ENCODE measurements at regions of chr18 and their contacts with region 1.

Region 1: GRCh38 chr18:54149078-54149697 is 75.3 kb downstream of the MBD2 start:
- DNase-seq: peak; percentile 63
- ATAC-seq: peak; percentile 87
- H3K4me3 ChIP-seq: peak overlapping the region; percentile 11 to 44; a peak in 3 of 4 replicates
- H3K27ac ChIP-seq: peak overlapping the region; percentile 74
- H3K4me1 ChIP-seq: peaks cover 25 to 37% of the 10 kb centered on the region in 2 experiments
- H3K27me3 ChIP-seq: no peaks in the 10 kb centered on the region
- CTCF ChIP-seq: no peak
- POLR2A ChIP-seq: no peak
- RAD21 ChIP-seq: 0 out of 2 replicates have a peak, but pooled peaks have one; percentile 15

Region 2: GRCh38 chr18:54269893-54270844 is 121.0 kb after region 1 on chr18:
- CTCF ChIA-PET with region 1: interaction called, 4 read pairs
- POLR2A ChIA-PET with region 1: no interaction called
- RAD21 ChIA-PET with region 1: no interaction called
- intact Hi-C with region 1: loop called (anchors 5 kb)
- DNase-seq: peak; percentile 68
- ATAC-seq: peak; percentile 79
- H3K4me3 ChIP-seq: peak overlapping the region; percentile 65 to 67
- H3K27ac ChIP-seq: peak overlapping the region; percentile 95
- H3K4me1 ChIP-seq: peaks cover 13 to 24% of the 10 kb centered on the region in 2 experiments
- H3K27me3 ChIP-seq: no peaks in the 10 kb centered on the region
- CTCF ChIP-seq: peak; percentile 31 to 58 (median 42); a peak in 4 of 6 replicates
- POLR2A ChIP-seq: no peak
- RAD21 ChIP-seq: peak; percentile 59